ENCODE measurements at regions of chr3 and their contacts with region 1.

Region 1: DNA sequence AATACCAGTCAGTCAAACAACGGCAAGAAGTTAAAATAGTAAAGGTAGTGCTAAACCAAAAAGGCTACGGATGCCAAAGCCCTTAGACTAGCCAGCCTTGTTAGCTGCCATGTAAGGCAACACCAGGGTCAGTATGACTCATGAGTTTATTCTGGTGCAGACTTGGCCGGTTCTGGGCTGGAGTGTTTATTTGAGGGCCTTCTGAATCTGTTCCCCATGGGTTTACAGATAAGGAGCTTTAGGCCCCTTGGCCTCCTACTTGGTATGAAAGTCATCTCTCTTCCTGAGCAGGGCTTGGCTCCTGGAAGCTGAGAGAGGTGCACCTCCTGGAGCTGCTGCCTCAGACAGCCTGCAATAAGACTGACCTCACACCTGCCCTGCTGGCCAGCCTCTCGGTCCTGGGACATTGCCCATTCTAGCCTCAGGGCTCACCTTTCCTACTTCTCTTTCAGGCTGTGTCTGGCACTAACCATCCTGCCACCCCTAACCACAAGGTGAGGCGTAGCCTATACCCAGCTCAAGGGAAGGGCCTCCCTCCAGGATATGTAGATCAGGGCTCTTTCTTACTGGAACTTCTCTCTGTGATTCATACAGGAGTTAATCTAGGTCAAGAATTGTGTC is 10.4 kb upstream of the RTP1 start:
- DNase-seq: no peak
- H3K4me3 ChIP-seq: no peak overlapping the region; a peak in 1 of 8 replicates
- H3K27ac ChIP-seq: no peak overlapping the region
- H3K4me1 ChIP-seq: peaks cover 6 to 36% (median 28%) of the 10 kb centered on the region in 4 experiments
- H3K27me3 ChIP-seq: no peaks in the 10 kb centered on the region; a peak in 1 of 7 replicates
- CTCF ChIP-seq: no peak
- EP300 ChIP-seq: no peak
- POLR2A ChIP-seq: no peak
- RAD21 ChIP-seq: no peak

Region 2: GRCh38 chr3:187172929-187173328 is 14.0 kb before region 1 on chr3:
- CTCF ChIA-PET with region 1: no interaction called
- POLR2A ChIA-PET with region 1: interaction called, 17 read pairs
- DNase-seq: no peak
- H3K4me3 ChIP-seq: peak overlapping the region in 1 of 4 experiments; percentile 0; a peak in 1 of 8 replicates
- H3K27ac ChIP-seq: no peak overlapping the region
- H3K4me1 ChIP-seq: peaks cover 4 to 10% (median 6%) of the 10 kb centered on the region in 4 experiments
- H3K27me3 ChIP-seq: no peaks in the 10 kb centered on the region
- CTCF ChIP-seq: no peak
- EP300 ChIP-seq: no peak
- POLR2A ChIP-seq: peak in 1 of 2 experiments; percentile 47; a peak in 1 of 3 replicates
- RAD21 ChIP-seq: no peak

Region 3: DNA sequence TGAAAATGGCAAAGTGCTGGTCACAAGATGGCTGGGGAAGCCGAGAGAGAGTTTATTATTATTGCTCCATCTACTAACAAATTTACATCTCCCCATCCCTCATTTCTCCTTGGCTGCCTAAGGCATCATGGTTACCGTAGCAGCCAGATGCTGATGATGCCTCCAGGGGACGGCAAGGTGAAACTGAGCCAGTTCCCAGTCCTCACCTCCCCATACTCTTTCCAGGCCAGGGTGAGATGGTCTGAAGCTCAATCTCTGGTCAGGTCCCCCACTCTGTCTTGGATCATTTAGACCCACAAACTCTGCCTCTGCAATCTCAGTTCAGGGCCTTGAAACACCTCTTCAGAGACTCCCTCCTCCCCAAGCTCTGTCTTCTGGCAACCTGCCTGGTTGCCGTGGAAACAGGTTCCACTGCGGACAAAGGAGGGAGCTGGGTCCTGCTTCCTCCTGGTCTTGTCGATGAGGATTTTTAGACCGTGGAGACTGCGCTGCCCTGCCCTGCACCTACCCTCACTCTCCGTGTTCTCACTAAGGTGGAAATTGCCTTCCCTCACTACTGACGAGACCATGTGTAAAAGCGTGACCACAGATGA is 10.2 kb after region 1 on chr3 and contains the start of gene RTP1:
- CTCF ChIA-PET with region 1: interaction called, 4 read pairs
- POLR2A ChIA-PET with region 1: interaction called, 10 read pairs
- DNase-seq: no peak
- H3K4me3 ChIP-seq: no peak within 1 kb of the TSS
- H3K27ac ChIP-seq: no peak within 1 kb of the TSS
- H3K4me1 ChIP-seq: peaks cover 0 to 5% (median 1%) of the 10 kb centered on the region in 4 experiments; a peak in 2 of 7 replicates
- H3K27me3 ChIP-seq: no peaks in the 10 kb centered on the region
- CTCF ChIP-seq: no peak
- EP300 ChIP-seq: no peak
- POLR2A ChIP-seq: no peak
- RAD21 ChIP-seq: no peak
- total RNA-seq, gene RTP1: 3.0 and 3.2 TPM in 2 replicates

Region 4: GRCh38 chr3:187210545-187211327 is 23.8 kb after region 1 on chr3:
- CTCF ChIA-PET with region 1: no interaction called
- POLR2A ChIA-PET with region 1: interaction called, 12 read pairs
- DNase-seq: no peak
- H3K4me3 ChIP-seq: no peak overlapping the region
- H3K27ac ChIP-seq: no peak overlapping the region
- H3K4me1 ChIP-seq: peaks cover 3 to 14% (median 7%) of the 10 kb centered on the region in 4 experiments; a peak in 4 of 7 replicates
- H3K27me3 ChIP-seq: no peaks in the 10 kb centered on the region
- CTCF ChIP-seq: no peak
- EP300 ChIP-seq: no peak
- POLR2A ChIP-seq: no peak
- RAD21 ChIP-seq: no peak

Region 5: GRCh38 chr3:187319699-187320302 is 132.9 kb after region 1 on chr3:
- CTCF ChIA-PET with region 1: no interaction called
- POLR2A ChIA-PET with region 1: no interaction called
- DNase-seq: peak; percentile 72 to 94
- H3K4me3 ChIP-seq: no peak overlapping the region
- H3K27ac ChIP-seq: no peak overlapping the region
- H3K4me1 ChIP-seq: peaks cover 0 to 4% (median 2%) of the 10 kb centered on the region in 4 experiments; a peak in 4 of 7 replicates
- H3K27me3 ChIP-seq: no peaks in the 10 kb centered on the region; a peak in 1 of 7 replicates
- CTCF ChIP-seq: peak; percentile 76 to 97 (median 95)
- EP300 ChIP-seq: no peak
- POLR2A ChIP-seq: no peak
- RAD21 ChIP-seq: peak; percentile 99 to 100

Measured in H1 (cell line).